ENCODE measurements at regions of chr16 and their contacts with region 1.

Region 1: GRCh38 chr16:21158208-21159110 is at the start of gene LDAF1:
- DNase-seq: peak; percentile 97
- H3K4me3 ChIP-seq: peak within 1 kb of the TSS; percentile 70 to 97 (median 81)
- H3K27ac ChIP-seq: peak within 1 kb of the TSS; percentile 6 to 85 (median 64)
- H3K4me1 ChIP-seq: peaks cover 9 to 44% (median 28%) of the 10 kb centered on the region in 6 donors
- H3K27me3 ChIP-seq: no peaks in the 10 kb centered on the region
- CTCF ChIP-seq: no peak
- POLR2A ChIP-seq: no peak
- total RNA-seq, gene LDAF1: 9.3 to 22.1 (median 13.3) TPM

Region 2: DNA sequence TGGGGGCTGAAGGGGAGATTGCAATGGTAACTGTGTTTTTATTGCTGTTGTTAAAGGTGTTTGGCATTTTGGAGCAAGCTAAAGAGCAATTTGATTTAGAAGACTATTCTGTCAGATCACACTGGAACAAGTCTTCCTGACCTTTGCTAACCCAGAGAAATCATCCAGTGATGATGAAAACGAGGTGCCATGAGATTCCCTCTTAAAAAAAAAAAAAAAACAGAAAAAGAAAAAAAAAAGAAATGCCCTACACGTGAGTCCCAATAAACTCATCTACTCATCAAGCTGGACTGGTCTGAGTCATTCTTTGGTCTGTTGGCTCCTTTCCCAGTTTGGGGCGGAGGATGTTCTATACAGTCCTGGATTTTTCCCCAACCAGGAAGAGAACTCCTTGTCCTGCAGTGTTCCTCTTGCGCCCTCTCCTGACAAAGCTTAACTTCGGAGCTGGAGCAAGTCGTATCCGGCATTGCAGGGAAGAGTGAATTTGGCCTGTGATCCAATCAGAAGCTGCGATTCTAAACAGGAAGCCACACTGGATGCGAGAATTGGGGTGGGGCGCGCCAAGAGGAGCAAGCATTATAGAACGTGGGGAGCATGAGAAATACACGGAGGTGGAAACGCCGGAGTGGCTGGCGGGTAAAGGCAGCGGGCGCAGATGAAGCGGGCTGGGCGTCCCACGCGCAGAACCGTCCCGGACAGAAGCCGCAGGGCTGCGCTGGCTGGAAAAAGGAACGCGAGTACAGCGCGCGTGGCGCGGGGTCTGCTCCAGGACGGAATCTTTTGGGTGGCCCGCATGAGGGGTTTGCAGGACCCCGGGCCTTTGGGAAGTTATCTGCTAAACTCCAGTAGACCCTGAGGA is 142.1 kb after region 1 on chr16:
- intact Hi-C with region 1: loop called (anchors 10 kb)
- DNase-seq: peak; percentile 82
- H3K4me3 ChIP-seq: peak overlapping the region; percentile 51 to 86 (median 68)
- H3K27ac ChIP-seq: peak overlapping the region in 7 of 8 donors; percentile 15 to 72 (median 65)
- H3K4me1 ChIP-seq: peaks cover 0 to 28% (median 21%) of the 10 kb centered on the region in 6 donors
- H3K27me3 ChIP-seq: peaks cover 0 to 32% (median 0%) of the 10 kb centered on the region in 7 donors
- CTCF ChIP-seq: peak; percentile 32 to 82 (median 63)
- POLR2A ChIP-seq: no peak

Region 3: DNA sequence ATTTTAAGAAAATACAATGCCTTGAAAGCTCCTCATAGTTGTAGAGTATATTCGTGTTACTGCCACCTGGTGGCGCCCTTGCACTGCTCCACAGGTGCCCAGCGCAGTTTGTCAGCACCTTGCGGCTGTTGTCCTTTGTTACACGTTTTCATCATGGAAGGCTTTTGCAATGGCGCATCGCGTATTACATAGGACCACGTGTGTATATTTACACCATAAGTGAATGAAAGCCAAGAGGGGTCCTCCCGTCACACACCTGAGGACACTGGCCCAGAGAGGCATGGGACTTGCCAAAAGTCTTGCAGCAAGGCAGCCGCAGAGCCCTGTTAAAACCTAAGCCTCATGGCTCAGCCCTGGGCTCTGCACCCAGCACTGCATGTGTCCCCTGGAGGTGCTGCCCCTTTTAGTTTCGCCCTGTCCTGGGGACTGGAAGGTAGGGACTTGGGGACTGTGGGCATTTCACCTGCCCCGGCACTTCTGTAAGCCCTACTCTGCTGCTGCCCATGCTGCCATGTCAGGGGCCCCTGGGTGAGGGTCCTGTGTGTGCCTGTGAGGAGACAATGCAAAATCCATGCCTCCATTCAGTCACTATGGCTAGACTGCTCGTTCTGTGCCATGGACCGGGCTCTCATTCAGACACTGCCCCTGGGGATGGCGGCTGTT is 1163.0 kb after region 1 on chr16:
- intact Hi-C with region 1: loop called (anchors 10 kb)
- DNase-seq: peak; percentile 89
- H3K4me3 ChIP-seq: no peak overlapping the region
- H3K27ac ChIP-seq: no peak overlapping the region
- H3K4me1 ChIP-seq: peaks cover 0 to 14% (median 4%) of the 10 kb centered on the region in 6 donors
- H3K27me3 ChIP-seq: no peaks in the 10 kb centered on the region
- CTCF ChIP-seq: peak; percentile 74 to 91 (median 85)
- POLR2A ChIP-seq: no peak

Measured in spleen (tissue), 13 donors.